ENCODE measurements at regions of chr11 and their contacts with region 1.

Region 1: GRCh38 chr11:94537031-94537600 is 6.6 kb upstream of the FUT4 start:
- DNase-seq: no peak
- ATAC-seq: no peak
- H3K4me3 ChIP-seq: no peak overlapping the region
- H3K4me3 Mint-ChIP-seq: no peak overlapping the region
- H3K27ac ChIP-seq: no peak overlapping the region
- H3K27ac Mint-ChIP-seq: no peak overlapping the region
- H3K4me1 ChIP-seq: no peaks in the 10 kb centered on the region
- H3K4me1 Mint-ChIP-seq: no peaks in the 10 kb centered on the region
- H3K27me3 ChIP-seq: peaks cover 0 to 8% (median 0%) of the 10 kb centered on the region in 4 experiments
- H3K27me3 Mint-ChIP-seq: peaks cover 29% of the 10 kb centered on the region
- CTCF ChIP-seq: no peak

Region 2: GRCh38 chr11:94254214-94254613 is 282.9 kb before region 1 on chr11:
- CTCF ChIA-PET with region 1: no interaction called
- POLR2A ChIA-PET with region 1: no interaction called
- intact Hi-C with region 1: no loop called
- DNase-seq: no peak
- ATAC-seq: no peak
- H3K4me3 ChIP-seq: no peak overlapping the region
- H3K4me3 Mint-ChIP-seq: no peak overlapping the region
- H3K27ac ChIP-seq: no peak overlapping the region
- H3K27ac Mint-ChIP-seq: no peak overlapping the region
- H3K4me1 ChIP-seq: no peaks in the 10 kb centered on the region
- H3K4me1 Mint-ChIP-seq: no peaks in the 10 kb centered on the region
- H3K27me3 ChIP-seq: no peaks in the 10 kb centered on the region
- H3K27me3 Mint-ChIP-seq: no peaks in the 10 kb centered on the region
- CTCF ChIP-seq: no peak

Region 3: DNA sequence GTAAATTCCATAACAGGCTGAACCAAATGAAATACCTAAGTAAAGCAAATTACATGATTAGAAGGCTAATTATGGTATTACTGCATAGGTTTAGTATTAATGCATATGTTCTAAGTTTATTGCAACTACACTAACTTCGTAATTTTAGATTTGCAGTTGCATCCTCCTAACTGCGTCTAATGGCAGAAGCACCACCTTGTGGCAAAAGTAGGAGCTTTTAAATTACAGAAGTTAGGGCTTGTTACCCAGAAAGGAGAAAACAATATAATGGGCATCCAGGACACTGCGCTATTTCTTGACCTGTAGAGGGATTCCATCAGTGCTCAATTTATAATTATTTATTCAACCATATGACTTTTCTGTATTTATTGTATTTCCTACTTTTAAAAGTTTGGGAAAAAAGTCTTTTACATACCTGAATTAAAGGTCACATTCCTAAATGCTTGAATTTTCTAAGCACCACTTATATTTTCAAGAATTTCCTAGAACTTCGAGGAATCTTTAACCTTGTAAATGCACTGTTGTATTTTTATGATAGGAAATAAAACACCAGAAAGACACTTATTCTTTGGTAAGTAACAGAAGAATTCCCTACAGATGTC is 119.6 kb before region 1 on chr11:
- CTCF ChIA-PET with region 1: no interaction called
- POLR2A ChIA-PET with region 1: no interaction called
- intact Hi-C with region 1: no loop called
- DNase-seq: no peak
- ATAC-seq: no peak
- H3K4me3 ChIP-seq: no peak overlapping the region
- H3K4me3 Mint-ChIP-seq: no peak overlapping the region
- H3K27ac ChIP-seq: no peak overlapping the region
- H3K27ac Mint-ChIP-seq: no peak overlapping the region
- H3K4me1 ChIP-seq: no peaks in the 10 kb centered on the region
- H3K4me1 Mint-ChIP-seq: no peaks in the 10 kb centered on the region
- H3K27me3 ChIP-seq: no peaks in the 10 kb centered on the region
- H3K27me3 Mint-ChIP-seq: no peaks in the 10 kb centered on the region
- CTCF ChIP-seq: no peak

Region 4: DNA sequence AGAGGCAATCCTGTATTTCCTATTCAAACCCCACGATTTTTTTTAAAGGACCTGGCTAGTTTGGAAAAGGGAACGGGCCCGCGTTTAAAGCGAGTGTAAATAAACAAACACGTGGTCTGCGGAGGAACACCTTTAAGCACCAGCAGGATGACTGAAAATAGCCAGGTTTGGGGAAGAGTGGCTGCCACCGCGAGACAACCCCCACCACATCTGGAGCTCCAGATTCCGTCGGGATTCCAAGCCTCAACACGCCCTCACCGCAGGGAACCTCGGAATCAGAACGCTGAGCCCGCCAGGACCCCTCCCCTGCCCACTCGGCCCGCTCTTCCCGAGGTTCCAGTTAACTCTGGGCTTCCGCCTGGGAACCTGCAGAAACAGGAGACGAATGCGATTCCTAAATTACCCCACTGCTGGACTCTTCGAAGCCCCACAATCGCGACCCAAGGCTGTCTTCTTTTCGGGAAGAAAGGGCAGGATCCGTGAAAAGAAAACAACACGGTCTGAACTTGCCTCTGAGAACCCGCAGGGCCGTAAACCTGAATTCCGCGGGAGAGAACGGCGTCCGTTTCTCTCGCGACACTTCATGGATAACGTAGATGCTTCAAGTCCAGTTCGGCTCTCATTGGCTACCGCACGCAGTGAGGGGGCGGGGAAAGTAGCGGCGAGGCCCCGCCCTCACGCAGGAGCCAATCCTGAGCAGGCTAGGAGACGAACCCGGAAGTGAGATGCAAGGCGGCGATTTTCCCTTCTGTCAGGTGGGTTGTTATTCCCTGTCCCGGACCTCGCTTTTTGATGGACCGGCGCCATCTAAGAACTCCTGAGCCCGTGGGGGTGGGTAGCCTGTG is 43.6 kb before region 1 on chr11 and contains the starts of genes ANKRD49 and MRE11:
- CTCF ChIA-PET with region 1: no interaction called
- POLR2A ChIA-PET with region 1: no interaction called
- intact Hi-C with region 1: no loop called
- DNase-seq: peak; percentile 98
- ATAC-seq: peak; percentile 100
- H3K4me3 ChIP-seq: peak within 1 kb of the TSS; percentile 73 to 99 (median 95)
- H3K4me3 Mint-ChIP-seq: peak within 1 kb of the TSS; percentile 95
- H3K27ac ChIP-seq: peak within 1 kb of the TSS; percentile 85 to 92
- H3K27ac Mint-ChIP-seq: peak within 1 kb of the TSS; percentile 94
- H3K4me1 ChIP-seq: peaks cover 13 to 26% of the 10 kb centered on the region in 2 donors
- H3K4me1 Mint-ChIP-seq: peaks cover 32% of the 10 kb centered on the region
- H3K27me3 ChIP-seq: no peaks in the 10 kb centered on the region
- H3K27me3 Mint-ChIP-seq: no peaks in the 10 kb centered on the region
- CTCF ChIP-seq: no peak
- total RNA-seq, gene ANKRD49: 51.4 and 52.0 TPM in 2 replicates
- total RNA-seq, gene MRE11: 53.5 and 54.0 TPM in 2 replicates

Region 5: DNA sequence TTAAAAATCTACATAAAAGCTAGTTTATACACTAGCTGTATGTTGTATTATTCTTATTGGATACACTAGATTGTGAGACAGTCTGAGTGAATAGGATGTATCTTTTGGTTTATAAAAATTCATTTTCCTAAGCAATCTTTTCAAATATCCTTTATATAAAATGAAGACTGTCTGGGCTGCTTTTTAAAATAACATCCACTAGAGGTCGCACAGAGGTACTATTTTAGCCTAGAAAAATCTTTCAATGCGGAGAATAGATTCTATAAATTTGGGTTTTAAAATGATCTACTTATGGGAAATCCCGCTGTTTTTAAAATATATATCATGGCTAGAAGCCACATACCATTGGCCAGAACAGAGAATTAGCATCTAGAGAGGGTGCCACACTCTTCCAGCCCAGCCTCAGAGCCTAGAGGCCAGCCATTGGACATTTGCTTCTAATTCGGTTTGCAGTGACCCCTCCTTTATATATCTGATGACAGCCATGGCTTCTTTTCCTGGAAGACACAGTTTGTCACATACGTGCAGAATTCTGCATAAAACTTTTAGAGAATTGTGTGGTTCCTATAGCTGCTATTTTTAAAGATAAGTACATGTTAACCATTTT is 17.5 kb before region 1 on chr11:
- CTCF ChIA-PET with region 1: interaction called, 11 read pairs
- POLR2A ChIA-PET with region 1: no interaction called
- intact Hi-C with region 1: no loop called
- DNase-seq: peak; percentile 48
- ATAC-seq: no peak
- H3K4me3 ChIP-seq: no peak overlapping the region
- H3K4me3 Mint-ChIP-seq: no peak overlapping the region
- H3K27ac ChIP-seq: no peak overlapping the region
- H3K27ac Mint-ChIP-seq: no peak overlapping the region
- H3K4me1 ChIP-seq: no peaks in the 10 kb centered on the region
- H3K4me1 Mint-ChIP-seq: no peaks in the 10 kb centered on the region
- H3K27me3 ChIP-seq: peaks cover 0 to 4% (median 2%) of the 10 kb centered on the region in 4 experiments
- H3K27me3 Mint-ChIP-seq: peaks cover 27% of the 10 kb centered on the region
- CTCF ChIP-seq: peak; percentile 83

Region 6: DNA sequence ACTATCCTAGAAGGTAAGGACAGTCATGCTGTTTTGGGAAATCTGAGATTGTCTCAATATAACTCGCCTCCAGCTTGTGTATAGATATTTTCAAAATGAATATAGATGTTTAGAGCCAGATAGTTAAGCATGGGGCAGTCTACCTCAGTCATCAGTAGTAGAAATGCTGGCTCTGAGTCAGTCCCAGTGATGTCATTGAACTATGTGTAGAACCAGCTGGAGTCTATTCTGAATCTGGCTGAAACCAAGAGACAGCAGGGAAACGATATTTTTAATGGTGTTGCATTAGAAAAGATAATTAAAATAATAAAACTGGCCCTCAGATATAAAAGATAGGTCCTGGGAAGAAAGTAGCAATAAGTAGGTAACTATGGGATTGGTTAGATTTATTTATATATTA is 55.9 kb after region 1 on chr11:
- CTCF ChIA-PET with region 1: no interaction called
- POLR2A ChIA-PET with region 1: no interaction called
- intact Hi-C with region 1: no loop called
- DNase-seq: no peak
- ATAC-seq: no peak
- H3K4me3 ChIP-seq: no peak overlapping the region
- H3K4me3 Mint-ChIP-seq: no peak overlapping the region
- H3K27ac ChIP-seq: no peak overlapping the region
- H3K27ac Mint-ChIP-seq: no peak overlapping the region
- H3K4me1 ChIP-seq: peaks cover 0 to 3% of the 10 kb centered on the region in 2 donors
- H3K4me1 Mint-ChIP-seq: peaks cover 9% of the 10 kb centered on the region
- H3K27me3 ChIP-seq: no peaks in the 10 kb centered on the region
- H3K27me3 Mint-ChIP-seq: no peaks in the 10 kb centered on the region
- CTCF ChIP-seq: no peak

Measured in B cell (primary cell).